ENCODE measurements at regions of chr10 and their contacts with region 1.

Region 1: GRCh38 chr10:16828114-16828568 is 10.9 kb upstream of the RSU1 start:
- DNase-seq: peak; percentile 74
- ATAC-seq: peak; percentile 68
- H3K4me3 ChIP-seq: no peak overlapping the region
- H3K27ac ChIP-seq: peak overlapping the region; percentile 57
- H3K4me1 ChIP-seq: peaks cover 12% of the 10 kb centered on the region; the same call in 1 of the 2 replicates
- H3K27me3 ChIP-seq: no peaks in the 10 kb centered on the region
- CTCF ChIP-seq: peak; percentile 49; the same call in 1 of the 2 replicates

Region 2: GRCh38 chr10:16891375-16892313 is 63.5 kb after region 1 on chr10:
- CTCF ChIA-PET with region 1: no interaction called
- POLR2A ChIA-PET with region 1: interaction called, 10 read pairs
- intact Hi-C with region 1: no loop called
- DNase-seq: peak; percentile 77
- ATAC-seq: peak; percentile 75
- H3K4me3 ChIP-seq: no peak overlapping the region
- H3K27ac ChIP-seq: peak overlapping the region; percentile 82
- H3K4me1 ChIP-seq: peaks cover 28% of the 10 kb centered on the region
- H3K27me3 ChIP-seq: no peaks in the 10 kb centered on the region
- CTCF ChIP-seq: no peak

Region 3: DNA sequence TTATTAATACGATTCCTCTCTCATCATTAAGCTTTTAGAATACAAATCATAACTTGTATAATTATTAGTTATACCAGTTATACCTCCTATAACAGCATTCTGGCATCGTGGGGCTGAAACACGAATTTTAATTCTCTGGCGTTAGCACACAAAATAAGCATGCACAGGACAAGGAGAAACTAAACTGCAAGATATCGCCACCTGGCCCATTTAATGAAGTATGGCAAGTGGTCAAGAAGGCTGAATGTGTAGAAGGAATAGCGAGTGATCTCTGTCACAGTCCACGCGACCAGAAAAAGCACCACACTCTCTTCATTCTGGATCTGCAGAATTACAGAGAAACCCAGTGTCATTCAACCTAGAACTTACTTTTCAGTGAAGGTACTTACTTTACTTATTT is 770.9 kb after region 1 on chr10:
- CTCF ChIA-PET with region 1: no interaction called
- POLR2A ChIA-PET with region 1: no interaction called
- intact Hi-C with region 1: loop called (anchors 5 kb)
- DNase-seq: peak; percentile 25
- ATAC-seq: 0 out of 2 replicates have a peak, but pooled peaks have one; percentile 22
- H3K4me3 ChIP-seq: no peak overlapping the region
- H3K27ac ChIP-seq: no peak overlapping the region
- H3K4me1 ChIP-seq: no peaks in the 10 kb centered on the region
- H3K27me3 ChIP-seq: no peaks in the 10 kb centered on the region
- CTCF ChIP-seq: peak; percentile 34; the same call in 1 of the 2 replicates

Measured in PC-3 (cell line).